ENCODE measurements at regions of chr1 and their contacts with region 1.

Region 1: DNA sequence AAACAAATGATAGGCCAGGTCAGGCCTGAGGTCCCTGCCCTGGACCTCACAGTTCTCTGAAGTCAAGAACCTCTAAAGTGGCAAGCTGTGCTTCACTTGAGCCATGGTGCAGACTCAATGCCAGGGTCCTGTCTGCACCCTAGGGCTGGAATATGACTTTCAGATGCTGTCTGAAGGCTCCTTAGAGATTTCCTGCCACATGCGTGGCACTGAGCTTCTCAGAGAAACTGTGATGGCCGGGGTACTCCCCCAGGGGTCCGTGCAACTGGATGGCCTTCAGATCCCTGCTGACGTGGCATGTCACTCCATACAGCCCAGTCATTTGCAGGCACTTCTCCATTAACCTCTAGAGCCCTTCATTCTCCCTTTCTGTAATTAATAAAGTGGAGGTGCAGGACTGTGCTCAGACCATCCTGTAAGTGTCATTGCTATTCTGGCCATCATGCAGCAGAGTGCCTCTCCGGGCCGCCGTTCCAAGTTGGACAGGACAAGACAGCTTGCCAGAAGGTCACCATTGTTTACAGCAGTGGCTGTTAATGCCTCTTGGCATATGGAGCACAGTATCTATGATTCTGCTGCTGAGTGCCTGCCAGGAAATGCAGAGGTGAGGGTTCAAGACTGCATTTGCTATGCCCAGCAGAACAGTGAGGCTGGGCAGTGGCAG is 205.1 kb upstream of the COA6 start:
- DNase-seq: peak in 1 of 2 donors; percentile 57
- ATAC-seq: peak; percentile 54 to 94 (median 80)
- H3K4me3 ChIP-seq: no peak overlapping the region
- H3K27ac ChIP-seq: no peak overlapping the region
- H3K4me1 ChIP-seq: no peaks in the 10 kb centered on the region
- H3K27me3 ChIP-seq: no peaks in the 10 kb centered on the region
- CTCF ChIP-seq: no peak

Region 2: DNA sequence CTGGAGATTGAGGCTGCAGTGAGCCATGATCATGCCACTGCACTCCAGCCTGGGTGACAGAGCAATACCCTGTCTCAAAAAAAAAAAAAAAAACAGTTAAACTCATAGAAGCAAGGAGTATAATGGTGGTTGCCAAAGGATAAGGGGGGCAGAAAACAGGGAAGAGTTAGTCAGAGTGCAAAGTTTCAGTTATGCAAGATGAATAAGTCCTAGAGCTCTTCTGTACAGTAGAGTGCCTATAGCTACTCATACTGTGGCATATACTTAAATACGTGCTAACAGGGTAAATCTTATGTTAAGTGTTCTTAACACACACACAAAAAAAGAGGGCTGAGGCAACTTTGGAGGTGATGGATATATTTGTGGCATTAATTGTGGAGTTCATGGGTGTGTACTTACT is 129.5 kb after region 1 on chr1:
- intact Hi-C with region 1: loop called in 1 of 2 experiments (anchors 5 kb)
- DNase-seq: no peak
- ATAC-seq: no peak
- H3K4me3 ChIP-seq: no peak overlapping the region
- H3K27ac ChIP-seq: no peak overlapping the region
- H3K4me1 ChIP-seq: no peaks in the 10 kb centered on the region
- H3K27me3 ChIP-seq: peaks cover 0 to 3% (median 0%) of the 10 kb centered on the region in 3 donors
- CTCF ChIP-seq: no peak

Measured in psoas muscle (tissue), 8 donors.